CD4-positive, alpha-beta T cell (primary cell): ENCODE measurements at regions of chr2 and their contacts with region 1.

Region 1: DNA sequence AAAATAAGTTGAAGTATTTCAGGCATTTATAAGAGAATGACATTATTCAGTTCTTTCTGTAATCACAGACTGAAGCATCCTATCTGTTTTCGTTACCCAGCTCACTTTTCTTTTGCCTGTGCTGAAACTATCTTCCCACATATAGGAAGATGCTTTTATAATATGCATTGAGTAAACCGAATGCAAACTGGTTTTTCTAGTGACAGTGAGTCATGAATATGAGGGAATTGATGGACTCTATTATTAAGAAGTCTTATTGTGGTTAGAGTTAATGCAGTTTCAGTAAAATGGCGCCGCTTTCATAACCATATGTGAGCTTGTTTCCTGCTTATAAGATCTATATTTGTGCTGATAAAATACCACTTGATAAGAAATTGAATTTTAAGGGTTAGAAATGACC is 59.2 kb downstream of the ACVR2A start:
- DNase-seq: no peak
- ATAC-seq: no peak
- H3K4me3 ChIP-seq: no peak overlapping the region
- H3K4me3 Mint-ChIP-seq: no peak overlapping the region
- H3K27ac ChIP-seq: no peak overlapping the region
- H3K27ac Mint-ChIP-seq: no peak overlapping the region
- H3K4me1 ChIP-seq: no peaks in the 10 kb centered on the region
- H3K4me1 Mint-ChIP-seq: peaks cover 14% of the 10 kb centered on the region
- H3K27me3 ChIP-seq: no peaks in the 10 kb centered on the region
- H3K27me3 Mint-ChIP-seq: no peaks in the 10 kb centered on the region
- CTCF ChIP-seq: no peak

Region 2: DNA sequence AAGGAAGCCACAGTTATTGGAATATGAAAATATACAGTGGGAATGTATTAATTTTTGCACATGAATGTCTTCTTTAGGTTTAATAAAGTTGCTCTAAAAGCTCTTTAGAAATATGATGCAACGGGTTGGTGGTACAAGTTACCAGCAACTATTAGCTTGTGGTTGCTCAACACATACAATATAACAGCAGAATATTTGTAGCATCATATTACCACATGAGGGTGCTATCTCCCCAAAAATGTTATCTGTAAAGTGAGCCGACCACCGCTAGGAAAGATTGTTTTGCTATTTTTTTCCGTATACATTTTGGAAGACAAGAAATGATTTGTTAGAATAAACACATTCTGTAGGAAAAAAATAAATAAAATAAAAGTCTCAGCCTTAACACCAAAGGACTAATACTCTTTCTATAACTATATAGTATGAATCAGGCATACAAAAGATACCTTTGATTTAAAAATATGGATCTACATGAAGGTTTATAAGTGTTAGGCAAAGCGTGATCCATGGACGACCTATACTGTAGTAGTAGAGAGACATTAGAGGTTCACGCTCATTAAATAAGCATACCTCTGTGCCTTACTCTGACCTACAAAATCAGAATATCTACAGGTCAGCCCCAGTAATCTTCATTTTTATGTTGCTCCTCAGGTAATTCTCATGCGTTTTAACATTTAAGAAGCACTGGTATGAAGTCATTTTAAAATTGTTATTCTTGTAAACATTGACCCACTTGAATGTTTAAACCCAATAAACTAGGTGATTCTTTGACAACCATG is 1169.8 kb before region 1 on chr2:
- CTCF ChIA-PET with region 1: no interaction called
- POLR2A ChIA-PET with region 1: no interaction called
- intact Hi-C with region 1: loop called in 1 of 2 experiments (anchors 10 kb)
- DNase-seq: peak in 3 of 14 experiments; percentile 4 to 7 (median 5)
- ATAC-seq: no peak
- H3K4me3 ChIP-seq: no peak overlapping the region
- H3K4me3 Mint-ChIP-seq: no peak overlapping the region
- H3K27ac ChIP-seq: no peak overlapping the region
- H3K27ac Mint-ChIP-seq: no peak overlapping the region
- H3K4me1 ChIP-seq: no peaks in the 10 kb centered on the region
- H3K4me1 Mint-ChIP-seq: no peaks in the 10 kb centered on the region
- H3K27me3 ChIP-seq: no peaks in the 10 kb centered on the region
- H3K27me3 Mint-ChIP-seq: no peaks in the 10 kb centered on the region
- CTCF ChIP-seq: no peak